ENCODE measurements at regions of chr19 and their contacts with region 1.

Region 1: GRCh38 chr19:28242297-28242927 is 970.5 kb downstream of the UQCRFS1 start:
- DNase-seq: peak in 1 of 2 donors; percentile 7
- ATAC-seq: no peak
- H3K4me3 ChIP-seq: no peak overlapping the region
- H3K27ac ChIP-seq: no peak overlapping the region
- H3K4me1 ChIP-seq: no peaks in the 10 kb centered on the region
- H3K27me3 ChIP-seq: peaks cover 0 to 10% (median 0%) of the 10 kb centered on the region in 7 donors
- CTCF ChIP-seq: peak; percentile 21 to 63 (median 56)

Region 2: GRCh38 chr19:27833031-27833430 is 409.4 kb before region 1 on chr19:
- intact Hi-C with region 1: no loop called
- DNase-seq: no peak
- ATAC-seq: no peak
- H3K4me3 ChIP-seq: no peak overlapping the region
- H3K27ac ChIP-seq: no peak overlapping the region
- H3K4me1 ChIP-seq: no peaks in the 10 kb centered on the region
- H3K27me3 ChIP-seq: no peaks in the 10 kb centered on the region
- CTCF ChIP-seq: no peak

Region 3: DNA sequence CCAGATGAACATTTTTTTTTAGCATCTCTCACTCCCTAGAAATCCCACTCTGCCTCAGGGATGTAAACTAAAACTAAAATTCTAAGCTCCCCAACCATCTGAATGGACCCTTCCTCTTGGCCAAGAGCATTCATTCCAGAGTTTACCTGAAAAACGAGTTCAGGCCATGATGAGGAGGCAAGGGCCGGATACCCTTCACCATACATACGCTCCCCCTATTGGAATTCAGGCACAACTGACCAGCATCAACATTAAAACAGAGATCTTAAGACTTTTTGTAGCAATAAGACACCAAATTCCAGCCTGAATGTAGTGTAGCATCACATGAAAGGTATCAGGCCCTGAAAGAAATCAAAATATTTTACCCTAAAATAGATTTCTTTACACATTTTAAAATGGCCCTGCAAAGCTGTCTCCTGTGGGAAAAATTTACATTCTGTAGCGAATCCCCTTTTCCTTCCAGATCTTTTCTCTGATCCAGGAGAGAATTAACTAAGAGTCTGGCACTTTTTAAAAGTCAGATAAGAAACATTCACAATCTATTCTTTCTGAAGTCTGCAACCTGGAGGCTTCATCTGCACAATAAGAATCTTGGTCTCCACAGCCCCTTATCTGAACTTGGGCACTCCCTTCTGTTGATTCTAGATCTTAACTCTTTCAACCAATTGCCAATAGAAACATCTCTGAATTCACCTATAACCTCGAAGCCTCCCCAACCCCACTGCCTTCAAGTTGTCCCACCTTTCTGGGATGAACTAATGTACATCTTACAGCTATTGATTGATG is 82.1 kb after region 1 on chr19:
- intact Hi-C with region 1: loop called in 3 of 10 experiments (anchors 2 to 10 kb)
- DNase-seq: no peak
- ATAC-seq: no peak
- H3K4me3 ChIP-seq: no peak overlapping the region
- H3K27ac ChIP-seq: no peak overlapping the region
- H3K4me1 ChIP-seq: no peaks in the 10 kb centered on the region
- H3K27me3 ChIP-seq: peaks cover 0 to 11% (median 4%) of the 10 kb centered on the region in 7 donors
- CTCF ChIP-seq: no peak

Region 4: DNA sequence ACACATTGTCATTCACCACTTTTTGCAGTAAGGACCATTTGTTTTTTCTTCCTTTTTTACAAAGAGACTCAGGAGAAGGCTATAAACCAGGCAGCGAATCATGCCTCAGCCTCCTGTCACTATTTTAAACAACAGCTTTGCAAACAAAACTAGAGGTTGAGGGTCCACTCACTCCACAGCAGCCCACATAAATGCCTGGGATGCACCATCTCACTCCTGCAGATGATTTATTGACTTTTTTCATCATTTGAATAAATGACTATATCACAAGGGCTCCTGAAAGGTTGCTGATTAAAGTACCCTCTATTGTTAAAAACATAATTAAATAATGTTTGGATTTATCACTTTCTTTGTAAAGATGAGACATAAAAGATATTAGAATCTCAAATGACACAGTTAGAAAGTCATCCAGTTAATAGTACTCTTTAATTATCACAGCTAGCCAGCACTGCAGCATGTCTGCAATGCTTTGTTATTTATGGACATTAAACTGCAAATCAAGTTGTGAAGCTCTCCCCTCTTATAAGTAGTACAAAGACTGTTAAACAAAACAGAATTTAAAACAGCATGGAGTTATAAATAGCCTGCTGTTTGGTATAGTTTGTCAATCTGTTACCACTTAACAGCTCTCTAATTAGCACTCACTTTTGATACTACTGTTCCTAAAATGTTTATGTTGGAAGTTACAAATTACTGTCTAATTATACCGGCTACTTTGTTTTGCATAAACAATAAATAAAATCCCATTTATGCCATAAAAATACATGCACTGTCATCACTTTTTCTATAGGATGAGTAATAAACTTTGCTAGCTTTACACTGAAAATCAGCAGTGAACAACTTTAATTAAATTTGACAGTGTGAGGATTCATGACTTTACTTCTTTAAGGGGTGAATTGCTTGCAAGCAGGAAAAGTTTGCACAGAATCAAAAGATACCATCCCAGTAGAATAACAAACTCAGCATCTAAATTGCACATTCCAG is 117.3 kb after region 1 on chr19:
- intact Hi-C with region 1: no loop called
- DNase-seq: no peak
- ATAC-seq: no peak
- H3K4me3 ChIP-seq: no peak overlapping the region
- H3K27ac ChIP-seq: no peak overlapping the region
- H3K4me1 ChIP-seq: no peaks in the 10 kb centered on the region
- H3K27me3 ChIP-seq: no peaks in the 10 kb centered on the region
- CTCF ChIP-seq: no peak

Region 5: DNA sequence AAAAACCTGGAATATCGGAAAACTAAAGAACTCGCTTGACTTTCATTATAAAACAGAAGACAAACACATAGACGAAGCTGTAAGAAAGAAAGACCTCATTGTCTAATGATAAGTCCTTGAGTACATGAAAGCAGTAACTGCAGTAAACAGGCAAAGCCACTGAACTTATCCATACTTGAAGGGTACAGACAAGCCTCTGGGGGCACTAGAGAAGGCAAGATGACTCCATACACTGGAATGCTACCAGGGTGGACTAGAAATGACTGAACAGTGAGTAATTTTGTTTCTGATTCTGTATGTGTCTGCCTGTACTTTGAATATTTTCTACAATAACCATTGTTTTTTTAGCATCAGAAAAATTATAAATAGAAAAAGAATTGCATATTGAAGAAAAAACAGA is 462.6 kb after region 1 on chr19:
- intact Hi-C with region 1: loop called in 1 of 10 experiments (anchors 10 kb)
- DNase-seq: no peak
- ATAC-seq: no peak
- H3K4me3 ChIP-seq: no peak overlapping the region
- H3K27ac ChIP-seq: no peak overlapping the region
- H3K4me1 ChIP-seq: no peaks in the 10 kb centered on the region
- H3K27me3 ChIP-seq: peaks cover 0 to 3% (median 0%) of the 10 kb centered on the region in 7 donors
- CTCF ChIP-seq: no peak